GM12878 (cell line): ENCODE measurements at regions of chr1 and their contacts with region 1.

Region 1: GRCh38 chr1:212665241-212666115 is 34.2 kb downstream of the BATF3 start:
- DNase-seq: no peak
- ATAC-seq: peak; percentile 98
- H3K4me3 ChIP-seq: peak overlapping the region; percentile 64
- H3K27ac ChIP-seq: peak overlapping the region; percentile 33; the same call in 1 of the 2 replicates
- H3K4me1 ChIP-seq: peaks cover 24% of the 10 kb centered on the region
- H3K27me3 ChIP-seq: no peaks in the 10 kb centered on the region
- CTCF ChIP-seq: peak; percentile 90 to 98 (median 94)
- EP300 ChIP-seq: no peak
- POLR2A ChIP-seq: no peak
- RAD21 ChIP-seq: peak; percentile 94

Region 2: DNA sequence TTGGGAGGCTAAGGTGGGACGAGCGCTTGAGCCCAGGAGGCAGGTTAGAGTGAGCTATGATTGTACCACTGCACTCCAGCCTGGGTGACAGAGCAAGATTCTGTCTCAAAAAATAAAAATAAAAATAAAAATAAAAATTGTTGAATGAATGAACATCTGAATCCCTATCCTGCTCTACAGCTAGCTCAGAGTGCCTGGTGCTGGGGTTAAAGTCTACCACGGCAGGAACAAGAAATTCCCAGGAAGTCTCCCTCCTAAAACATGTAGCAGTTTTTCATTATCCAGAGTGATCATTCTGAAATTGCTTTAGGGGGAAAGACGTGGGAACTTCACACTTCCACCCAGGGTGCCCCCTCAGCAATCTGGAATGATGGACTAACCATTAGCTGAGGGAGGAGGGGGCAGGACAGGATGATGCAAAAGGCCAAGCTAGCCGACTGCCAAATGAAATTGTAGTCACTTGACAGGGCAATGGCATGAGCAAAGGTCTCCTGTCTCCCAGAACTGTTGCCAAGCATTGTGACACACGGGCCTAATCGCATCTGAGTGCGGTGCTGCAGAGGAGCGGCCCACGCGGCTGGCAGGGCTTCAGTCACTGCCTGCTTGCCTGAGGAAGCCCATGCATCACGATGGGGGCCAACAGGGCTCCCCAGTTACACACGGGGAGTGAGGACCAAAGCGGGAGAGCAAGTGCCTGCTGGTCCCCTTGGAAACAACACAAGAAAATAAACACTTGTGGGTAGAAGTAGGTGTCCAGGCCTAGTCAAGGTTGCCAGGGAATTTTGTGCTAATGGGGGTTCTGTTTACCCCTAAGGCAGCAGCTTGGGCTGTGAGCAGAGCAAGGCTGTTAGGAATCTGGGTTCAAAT is 147.1 kb before region 1 on chr1:
- CTCF ChIA-PET with region 1: no interaction called
- POLR2A ChIA-PET with region 1: no interaction called
- RAD21 ChIA-PET with region 1: no interaction called
- SMC1A ChIA-PET with region 1: no interaction called
- in situ Hi-C with region 1: no loop called
- intact Hi-C with region 1: no loop called
- DNase-seq: no peak
- ATAC-seq: no peak
- H3K4me3 ChIP-seq: no peak overlapping the region
- H3K27ac ChIP-seq: no peak overlapping the region
- H3K4me1 ChIP-seq: no peaks in the 10 kb centered on the region
- H3K27me3 ChIP-seq: peaks cover 5 to 8% of the 10 kb centered on the region in 2 experiments; a peak in 3 of 4 replicates
- CTCF ChIP-seq: no peak
- EP300 ChIP-seq: no peak
- POLR2A ChIP-seq: no peak
- RAD21 ChIP-seq: no peak

Region 3: DNA sequence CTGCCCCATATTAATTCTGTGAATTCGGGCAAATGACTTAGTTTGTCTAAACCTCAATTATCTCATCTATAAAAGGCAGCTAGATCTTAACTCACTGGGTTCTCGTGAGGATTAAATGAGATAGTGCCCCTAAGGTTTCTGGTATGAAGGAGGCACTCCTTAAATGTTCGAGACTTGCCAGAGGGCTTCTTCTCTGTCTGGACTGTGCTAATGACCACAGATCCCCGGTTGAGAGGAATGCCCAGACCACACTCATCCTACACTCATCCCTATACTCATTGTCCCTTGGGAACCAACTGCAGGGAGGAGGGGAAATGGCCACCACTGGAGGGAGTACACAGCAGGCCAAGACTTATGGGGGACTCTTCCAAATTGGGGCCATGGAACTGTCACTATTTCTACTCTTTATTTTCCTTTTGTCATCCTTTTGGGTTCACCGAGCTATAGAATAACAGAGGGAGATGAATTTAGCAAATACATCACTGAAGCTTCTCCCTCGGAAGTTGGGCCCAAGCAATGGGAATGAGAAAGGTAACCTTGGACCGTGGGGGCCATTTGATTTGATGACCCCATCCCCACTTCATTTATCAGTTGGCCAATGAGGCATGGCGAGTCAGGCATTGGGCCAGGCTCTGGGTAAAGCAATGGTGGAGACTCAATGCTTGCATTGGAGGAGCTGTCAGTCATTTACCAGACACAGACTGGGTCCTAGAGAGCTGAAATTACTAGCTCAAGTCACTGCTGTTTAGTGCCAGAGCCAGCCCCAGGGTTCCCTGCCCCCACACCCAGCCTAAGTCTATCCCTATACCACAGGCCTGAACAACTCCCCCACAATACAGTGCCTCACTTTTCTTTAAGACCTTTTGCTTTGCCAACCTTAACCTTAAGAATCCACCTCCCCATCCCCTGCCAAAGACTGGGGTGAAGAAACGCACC is 51.8 kb before region 1 on chr1:
- CTCF ChIA-PET with region 1: interaction called, 7 read pairs
- POLR2A ChIA-PET with region 1: no interaction called
- RAD21 ChIA-PET with region 1: interaction called, 8 read pairs
- SMC1A ChIA-PET with region 1: interaction called, 10 read pairs
- in situ Hi-C with region 1: no loop called
- intact Hi-C with region 1: no loop called
- DNase-seq: no peak
- ATAC-seq: peak; percentile 8
- H3K4me3 ChIP-seq: peak overlapping the region; percentile 65; the same call in 1 of the 2 replicates
- H3K27ac ChIP-seq: peak overlapping the region; percentile 66
- H3K4me1 ChIP-seq: peaks cover 27% of the 10 kb centered on the region
- H3K27me3 ChIP-seq: no peaks in the 10 kb centered on the region
- CTCF ChIP-seq: no peak
- EP300 ChIP-seq: no peak
- POLR2A ChIP-seq: no peak
- RAD21 ChIP-seq: no peak

Region 4: GRCh38 chr1:212683357-212683722 is 17.9 kb after region 1 on chr1:
- CTCF ChIA-PET with region 1: interaction called, 10 read pairs
- POLR2A ChIA-PET with region 1: interaction called, 15 read pairs
- RAD21 ChIA-PET with region 1: interaction called, 59 read pairs
- SMC1A ChIA-PET with region 1: interaction called, 38 read pairs
- in situ Hi-C with region 1: no loop called
- intact Hi-C with region 1: no loop called
- DNase-seq: peak; percentile 81
- ATAC-seq: peak; percentile 79
- H3K4me3 ChIP-seq: peak overlapping the region; percentile 33; the same call in 1 of the 2 replicates
- H3K27ac ChIP-seq: peak overlapping the region; percentile 90
- H3K4me1 ChIP-seq: peaks cover 62% of the 10 kb centered on the region
- H3K27me3 ChIP-seq: no peaks in the 10 kb centered on the region
- CTCF ChIP-seq: no peak
- EP300 ChIP-seq: peak in 1 of 2 experiments; percentile 52; a peak in 1 of 4 replicates
- POLR2A ChIP-seq: peak; percentile 80
- RAD21 ChIP-seq: no peak

Region 5: GRCh38 chr1:212699104-212699624 is 33.7 kb after region 1 on chr1:
- CTCF ChIA-PET with region 1: interaction called, 91 read pairs
- POLR2A ChIA-PET with region 1: interaction called, 3 read pairs
- RAD21 ChIA-PET with region 1: interaction called, 47 read pairs
- SMC1A ChIA-PET with region 1: interaction called, 64 read pairs
- in situ Hi-C with region 1: no loop called
- intact Hi-C with region 1: loop called (anchors 1 kb)
- DNase-seq: no peak
- ATAC-seq: peak; percentile 81
- H3K4me3 ChIP-seq: peak overlapping the region; percentile 82
- H3K27ac ChIP-seq: no peak overlapping the region
- H3K4me1 ChIP-seq: peaks cover 27% of the 10 kb centered on the region
- H3K27me3 ChIP-seq: no peaks in the 10 kb centered on the region
- CTCF ChIP-seq: peak; percentile 48 to 79 (median 71)
- EP300 ChIP-seq: no peak
- POLR2A ChIP-seq: no peak
- RAD21 ChIP-seq: peak; percentile 51

Region 6: GRCh38 chr1:212760126-212760823 is 94.8 kb after region 1 on chr1:
- CTCF ChIA-PET with region 1: interaction called, 27 read pairs
- POLR2A ChIA-PET with region 1: interaction called, 7 read pairs
- RAD21 ChIA-PET with region 1: interaction called, 19 read pairs
- SMC1A ChIA-PET with region 1: interaction called, 11 read pairs
- in situ Hi-C with region 1: no loop called
- intact Hi-C with region 1: loop called (anchors 1 kb)
- DNase-seq: no peak
- ATAC-seq: peak; percentile 99
- H3K4me3 ChIP-seq: no peak overlapping the region
- H3K27ac ChIP-seq: no peak overlapping the region
- H3K4me1 ChIP-seq: no peaks in the 10 kb centered on the region
- H3K27me3 ChIP-seq: no peaks in the 10 kb centered on the region
- CTCF ChIP-seq: peak; percentile 55 to 67 (median 63); a peak in 5 of 6 replicates
- EP300 ChIP-seq: no peak
- POLR2A ChIP-seq: no peak
- RAD21 ChIP-seq: peak; percentile 69

Region 7: GRCh38 chr1:212782422-212783154 is 117.1 kb after region 1 on chr1:
- CTCF ChIA-PET with region 1: interaction called, 103 read pairs
- POLR2A ChIA-PET with region 1: no interaction called
- RAD21 ChIA-PET with region 1: interaction called, 45 read pairs
- SMC1A ChIA-PET with region 1: interaction called, 80 read pairs
- in situ Hi-C with region 1: no loop called
- intact Hi-C with region 1: loop called (anchors 1 kb)
- DNase-seq: no peak
- ATAC-seq: peak; percentile 68
- H3K4me3 ChIP-seq: no peak overlapping the region
- H3K27ac ChIP-seq: no peak overlapping the region
- H3K4me1 ChIP-seq: peaks cover 10% of the 10 kb centered on the region; the same call in 1 of the 2 replicates
- H3K27me3 ChIP-seq: no peaks in the 10 kb centered on the region
- CTCF ChIP-seq: peak; percentile 53 to 71 (median 64); a peak in 5 of 6 replicates
- EP300 ChIP-seq: no peak
- POLR2A ChIP-seq: no peak
- RAD21 ChIP-seq: peak; percentile 81

Region 8: DNA sequence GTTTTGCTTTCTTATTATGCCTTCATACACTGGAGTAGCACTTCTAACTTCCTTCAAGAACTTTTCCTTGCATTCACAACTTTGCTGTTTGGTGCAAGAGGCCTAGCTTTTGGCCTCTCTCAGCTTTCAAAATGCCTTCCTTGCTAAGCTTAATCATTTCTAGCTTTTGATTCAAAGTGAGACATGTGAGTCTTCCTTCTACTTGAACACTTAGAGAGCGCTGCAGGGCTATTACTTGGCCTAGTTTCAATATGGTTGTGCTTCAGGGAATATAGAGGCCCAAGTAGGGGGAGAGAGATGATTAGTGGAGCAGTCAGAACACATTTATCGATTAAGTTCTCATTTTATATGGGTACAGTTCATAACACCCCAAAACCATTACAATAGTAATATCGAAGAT is 337.8 kb after region 1 on chr1:
- CTCF ChIA-PET with region 1: interaction called, 61 read pairs
- POLR2A ChIA-PET with region 1: no interaction called
- RAD21 ChIA-PET with region 1: interaction called, 12 read pairs
- SMC1A ChIA-PET with region 1: interaction called, 44 read pairs
- in situ Hi-C with region 1: loop called (anchors 5 kb)
- intact Hi-C with region 1: no loop called
- DNase-seq: no peak
- ATAC-seq: peak; percentile 88
- H3K4me3 ChIP-seq: no peak overlapping the region
- H3K27ac ChIP-seq: peak overlapping the region; percentile 22; the same call in 1 of the 2 replicates
- H3K4me1 ChIP-seq: no peaks in the 10 kb centered on the region
- H3K27me3 ChIP-seq: no peaks in the 10 kb centered on the region
- CTCF ChIP-seq: no peak
- EP300 ChIP-seq: no peak
- POLR2A ChIP-seq: no peak
- RAD21 ChIP-seq: no peak